CD4-positive, alpha-beta memory T cell (primary cell): ENCODE measurements at regions of chr15 and their contacts with region 1.

Region 1: GRCh38 chr15:71730277-71731144 is 79.8 kb upstream of the NR2E3 start:
- DNase-seq: peak in 4 of 5 donors; percentile 9 to 28 (median 18)
- H3K4me3 ChIP-seq: no peak overlapping the region
- H3K4me3 Mint-ChIP-seq: no peak overlapping the region
- H3K27ac ChIP-seq: no peak overlapping the region
- H3K27ac Mint-ChIP-seq: no peak overlapping the region
- H3K4me1 ChIP-seq: no peaks in the 10 kb centered on the region
- H3K4me1 Mint-ChIP-seq: no peaks in the 10 kb centered on the region
- H3K27me3 ChIP-seq: no peaks in the 10 kb centered on the region
- H3K27me3 Mint-ChIP-seq: peaks cover 8% of the 10 kb centered on the region in 2 donors

Region 2: GRCh38 chr15:71448688-71449114 is 281.8 kb before region 1 on chr15:
- CTCF ChIA-PET with region 1: interaction called, 4 read pairs
- POLR2A ChIA-PET with region 1: no interaction called
- intact Hi-C with region 1: loop called (anchors 1 kb)
- DNase-seq: no peak
- H3K4me3 ChIP-seq: no peak overlapping the region
- H3K4me3 Mint-ChIP-seq: no peak overlapping the region
- H3K27ac ChIP-seq: no peak overlapping the region
- H3K27ac Mint-ChIP-seq: no peak overlapping the region
- H3K4me1 ChIP-seq: no peaks in the 10 kb centered on the region
- H3K4me1 Mint-ChIP-seq: no peaks in the 10 kb centered on the region
- H3K27me3 ChIP-seq: no peaks in the 10 kb centered on the region
- H3K27me3 Mint-ChIP-seq: peaks cover 5 to 8% of the 10 kb centered on the region in 2 donors

Region 3: DNA sequence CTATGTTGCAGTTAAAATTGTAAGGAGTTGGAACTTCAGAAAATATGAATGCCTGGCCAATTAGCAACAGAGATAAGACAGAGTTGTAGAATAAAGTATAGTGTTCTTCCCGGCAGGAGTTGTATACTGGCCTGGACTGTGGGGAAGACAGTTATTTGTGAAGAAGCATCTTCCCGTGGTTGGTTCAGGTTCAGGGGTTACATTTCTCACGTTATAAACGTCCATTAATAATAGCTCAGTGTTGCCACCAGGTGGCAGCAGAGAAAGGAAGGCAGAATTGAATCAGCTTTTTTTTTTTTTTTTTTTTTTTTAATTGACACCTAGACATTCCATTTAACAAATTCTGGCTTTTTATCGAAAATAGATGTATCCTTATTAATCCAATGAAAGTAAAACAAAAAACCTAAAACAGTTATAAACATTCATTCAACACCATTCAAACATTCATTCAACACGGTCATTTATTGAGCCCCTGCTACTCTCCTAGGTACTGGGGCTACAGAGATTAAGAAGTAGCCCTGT is 13.4 kb after region 1 on chr15:
- CTCF ChIA-PET with region 1: interaction called, 12 read pairs
- POLR2A ChIA-PET with region 1: no interaction called
- intact Hi-C with region 1: no loop called
- DNase-seq: peak; percentile 38 to 53 (median 42)
- H3K4me3 ChIP-seq: no peak overlapping the region
- H3K4me3 Mint-ChIP-seq: no peak overlapping the region
- H3K27ac ChIP-seq: no peak overlapping the region
- H3K27ac Mint-ChIP-seq: no peak overlapping the region
- H3K4me1 ChIP-seq: no peaks in the 10 kb centered on the region
- H3K4me1 Mint-ChIP-seq: peaks cover 0 to 2% (median under 1%) of the 10 kb centered on the region in 4 donors
- H3K27me3 ChIP-seq: no peaks in the 10 kb centered on the region
- H3K27me3 Mint-ChIP-seq: peaks cover 4 to 5% of the 10 kb centered on the region in 2 donors